Tibial artery (tissue), 4 donors: ENCODE measurements at regions of chr5 and their contacts with region 1.

Region 1: DNA sequence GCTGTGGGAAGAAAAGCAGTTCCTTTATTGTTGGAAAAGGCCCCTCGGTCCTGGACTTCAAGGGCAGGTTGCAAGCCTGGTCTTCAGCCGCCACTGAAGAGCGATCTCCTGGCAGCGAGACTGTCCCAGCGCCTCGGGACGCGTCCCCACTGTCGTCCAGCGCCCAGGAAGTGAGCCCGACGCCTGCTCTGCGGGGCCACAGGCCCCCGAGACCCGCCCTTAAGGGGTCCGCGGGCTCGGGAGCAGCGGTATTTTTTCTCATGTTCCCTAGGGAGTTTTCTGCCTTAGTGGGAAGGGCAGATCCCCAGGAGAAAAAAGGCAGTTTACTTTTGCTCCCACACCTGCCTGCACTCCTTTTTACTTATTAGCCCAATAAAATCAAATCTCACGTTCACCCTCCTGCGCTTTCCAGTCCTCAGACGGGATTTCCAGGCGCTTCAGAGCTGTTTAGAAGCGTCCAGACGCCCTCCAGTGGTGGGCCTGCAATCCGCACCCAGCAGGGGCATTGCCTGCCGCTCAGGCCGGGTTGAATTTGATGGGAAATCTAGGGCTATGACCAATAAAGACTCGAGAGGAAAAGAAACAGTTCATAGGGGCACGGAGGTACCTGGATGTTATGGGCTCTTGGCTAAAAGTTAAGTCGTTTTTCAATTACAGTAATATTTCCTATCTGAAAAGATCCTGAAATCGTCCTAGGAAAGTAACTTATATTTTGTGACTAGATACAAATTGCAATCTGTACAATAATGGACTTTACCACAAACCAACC is 2.8 kb upstream of the EFNA5 start:
- DNase-seq: peak; percentile 85 to 90
- H3K4me3 ChIP-seq: peak overlapping the region; percentile 60 to 76
- H3K27ac ChIP-seq: peak overlapping the region; percentile 81 to 88
- H3K4me1 ChIP-seq: peaks cover 0 to 14% (median 3%) of the 10 kb centered on the region in 4 donors
- H3K27me3 ChIP-seq: no peaks in the 10 kb centered on the region
- CTCF ChIP-seq: peak; percentile 92 to 97

Region 2: DNA sequence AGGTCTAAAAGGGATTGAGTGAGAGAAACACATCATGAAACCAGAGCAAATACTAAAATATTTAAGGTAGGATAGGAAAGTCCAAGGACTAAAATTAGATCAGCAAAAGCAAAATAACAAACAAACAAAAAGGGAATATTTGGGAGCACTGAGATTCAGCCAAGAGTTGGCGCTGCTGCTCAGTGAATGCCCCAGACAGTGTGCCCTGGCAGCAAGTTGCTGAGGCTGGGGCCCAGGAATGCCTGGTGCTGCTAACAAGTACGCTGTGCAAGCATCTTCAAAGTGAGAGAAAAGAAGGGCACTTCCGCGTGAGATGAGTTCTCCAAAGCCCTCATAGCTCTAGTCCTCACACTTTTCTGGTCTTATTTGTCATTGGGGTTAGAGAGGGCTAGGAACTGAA is 606.2 kb before region 1 on chr5:
- intact Hi-C with region 1: loop called (anchors 10 kb)
- DNase-seq: no peak
- H3K4me3 ChIP-seq: no peak overlapping the region
- H3K27ac ChIP-seq: peak overlapping the region; percentile 3 to 9
- H3K4me1 ChIP-seq: no peaks in the 10 kb centered on the region
- H3K27me3 ChIP-seq: no peaks in the 10 kb centered on the region
- CTCF ChIP-seq: peak in 1 of 2 experiments; percentile 29

Region 3: DNA sequence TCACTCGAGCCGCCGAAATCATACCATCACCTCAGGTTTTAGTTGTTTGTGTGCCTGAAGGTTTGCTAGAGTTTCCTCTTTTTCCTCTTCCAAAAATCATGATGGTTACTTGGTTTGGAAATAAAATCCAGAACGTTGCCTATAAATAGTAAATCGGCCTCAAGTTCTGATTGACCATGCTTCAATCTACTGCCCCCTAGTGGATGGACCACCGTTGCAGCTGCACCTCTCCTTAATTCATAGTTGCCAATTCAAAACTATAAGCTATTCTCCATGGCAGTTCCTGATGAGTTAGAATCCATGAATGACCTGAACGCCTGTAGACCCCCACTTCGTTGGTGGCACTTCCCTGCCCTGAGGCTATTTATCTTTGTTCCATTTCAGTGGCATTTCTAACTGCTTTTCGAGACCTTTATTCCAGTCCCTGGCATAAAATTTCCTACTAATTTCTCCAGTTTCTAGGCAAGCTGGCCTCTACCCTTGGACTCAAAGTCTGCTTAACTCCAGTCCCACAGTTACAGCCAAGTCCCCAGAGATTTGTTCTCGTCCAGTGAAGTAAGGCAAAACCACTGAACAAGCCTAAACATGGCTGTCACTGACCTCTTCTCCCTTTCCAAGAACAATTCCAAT is 425.4 kb before region 1 on chr5:
- intact Hi-C with region 1: loop called (anchors 10 kb)
- DNase-seq: peak; percentile 65 to 73
- H3K4me3 ChIP-seq: no peak overlapping the region
- H3K27ac ChIP-seq: peak overlapping the region in 1 of 2 donors; percentile 61
- H3K4me1 ChIP-seq: peaks cover 0 to 10% (median 4%) of the 10 kb centered on the region in 4 donors
- H3K27me3 ChIP-seq: no peaks in the 10 kb centered on the region
- CTCF ChIP-seq: peak; percentile 54 to 75

Region 4: DNA sequence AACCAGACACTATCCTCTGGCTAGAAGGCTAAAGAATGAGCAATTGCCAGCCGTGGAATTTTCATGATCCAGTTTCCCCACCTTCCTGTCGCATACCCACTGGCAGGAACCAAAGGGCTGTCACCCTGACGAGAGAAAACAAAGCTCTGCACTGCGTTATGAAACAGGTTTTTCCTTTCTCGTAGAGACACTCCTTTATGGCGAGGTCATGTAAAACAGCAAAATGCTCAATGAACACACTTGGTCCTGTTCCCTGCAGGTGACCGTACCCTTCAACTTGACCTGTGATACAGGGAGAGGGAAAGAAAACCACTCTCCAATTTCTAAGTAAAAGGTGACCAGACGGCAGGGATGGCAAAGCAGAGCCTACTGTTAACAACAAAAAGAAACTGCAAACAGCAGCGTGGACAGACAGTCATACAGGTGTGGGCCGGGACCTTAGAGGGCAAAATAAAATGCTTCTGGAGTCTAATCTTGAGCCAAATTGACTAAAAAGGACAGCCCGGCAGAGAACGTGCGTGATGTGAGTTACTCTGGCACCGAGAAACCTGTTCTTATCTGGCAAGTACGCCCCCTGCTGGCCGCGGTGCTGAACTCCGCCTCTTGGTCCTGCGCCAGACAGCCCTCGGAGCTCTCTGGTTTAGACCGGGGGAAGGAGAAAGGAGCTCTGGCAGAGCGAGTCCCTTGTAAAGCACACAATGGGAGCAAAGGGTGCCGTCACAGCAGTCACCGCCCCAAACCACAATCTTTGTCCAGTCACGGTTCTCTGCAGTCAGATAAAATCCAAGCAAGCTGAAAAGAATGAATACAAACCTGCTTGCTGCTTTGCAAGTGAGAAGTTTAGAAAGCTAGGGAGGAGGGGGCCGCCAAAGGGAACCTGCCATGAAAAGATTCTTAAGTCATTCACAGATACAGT is 101.7 kb before region 1 on chr5:
- intact Hi-C with region 1: loop called (anchors 5 kb)
- DNase-seq: peak; percentile 95 to 97
- H3K4me3 ChIP-seq: peak overlapping the region; percentile 46 to 58
- H3K27ac ChIP-seq: peak overlapping the region; percentile 60 to 71
- H3K4me1 ChIP-seq: peaks cover 0 to 35% (median 9%) of the 10 kb centered on the region in 4 donors
- H3K27me3 ChIP-seq: no peaks in the 10 kb centered on the region
- CTCF ChIP-seq: peak; percentile 87 to 91

Region 5: GRCh38 chr5:107855171-107855570 is 181.6 kb after region 1 on chr5:
- intact Hi-C with region 1: no loop called
- DNase-seq: no peak
- H3K4me3 ChIP-seq: no peak overlapping the region
- H3K27ac ChIP-seq: no peak overlapping the region
- H3K4me1 ChIP-seq: no peaks in the 10 kb centered on the region
- H3K27me3 ChIP-seq: no peaks in the 10 kb centered on the region
- CTCF ChIP-seq: no peak

Region 6: GRCh38 chr5:108560581-108560980 is 887.0 kb after region 1 on chr5:
- intact Hi-C with region 1: no loop called
- DNase-seq: peak in 1 of 2 donors; percentile 47
- H3K4me3 ChIP-seq: no peak overlapping the region
- H3K27ac ChIP-seq: peak overlapping the region; percentile 29 to 38
- H3K4me1 ChIP-seq: peaks cover 0 to 14% (median 4%) of the 10 kb centered on the region in 4 donors
- H3K27me3 ChIP-seq: no peaks in the 10 kb centered on the region
- CTCF ChIP-seq: no peak

Region 7: GRCh38 chr5:109630093-109630492 is 1956.5 kb after region 1 on chr5:
- intact Hi-C with region 1: loop called (anchors 5 kb)
- DNase-seq: no peak
- H3K4me3 ChIP-seq: no peak overlapping the region
- H3K27ac ChIP-seq: no peak overlapping the region
- H3K4me1 ChIP-seq: peaks cover 0 to 11% (median 3%) of the 10 kb centered on the region in 4 donors
- H3K27me3 ChIP-seq: no peaks in the 10 kb centered on the region
- CTCF ChIP-seq: no peak